Left ventricle myocardium superior (tissue), 1 donor: ENCODE measurements at regions of chr2 and their contacts with region 1.

Region 1: GRCh38 chr2:17830053-17831034 is 14.1 kb downstream of the MSGN1 start:
- DNase-seq: peak; percentile 86
- ATAC-seq: peak; percentile 97

Region 2: DNA sequence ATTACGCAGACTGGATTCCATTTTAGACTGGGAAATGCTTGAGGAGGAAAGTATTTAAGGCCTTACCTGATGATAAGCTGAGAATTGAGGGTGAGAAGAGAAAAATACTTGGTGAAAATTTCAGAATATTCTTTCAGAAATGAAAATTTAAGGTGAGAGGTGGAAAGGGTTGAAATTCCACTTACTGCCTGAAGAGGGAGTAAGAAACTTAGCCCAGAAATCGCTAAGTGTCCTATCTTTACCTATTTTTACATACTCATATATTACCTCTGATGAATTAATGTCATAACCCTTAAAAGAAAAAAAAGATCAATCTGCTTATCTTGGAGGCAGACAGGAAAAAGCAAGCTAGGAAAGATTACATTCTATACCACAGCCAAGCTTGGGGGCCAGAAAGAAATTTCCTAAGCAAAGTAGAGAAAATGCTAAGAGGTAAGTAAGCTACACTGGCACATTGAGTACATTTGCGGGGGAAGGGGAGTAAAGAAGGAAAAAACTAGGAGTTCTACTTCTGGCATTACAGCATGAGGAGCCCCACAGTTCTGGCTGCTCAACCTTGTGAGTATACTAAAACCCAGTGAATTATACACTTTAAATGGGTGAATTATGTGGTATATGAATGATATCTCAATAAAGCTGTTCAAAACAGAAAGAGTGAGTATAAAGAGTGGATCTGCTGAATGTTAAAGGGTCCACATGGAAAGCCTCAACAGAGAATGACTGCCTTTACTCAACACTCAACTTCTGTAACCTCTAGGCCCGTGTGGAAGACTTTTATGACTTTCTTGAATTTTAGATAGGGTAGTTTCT is 110.6 kb before region 1 on chr2:
- intact Hi-C with region 1: loop called (anchors 10 kb)
- DNase-seq: no peak
- ATAC-seq: no peak

Region 3: DNA sequence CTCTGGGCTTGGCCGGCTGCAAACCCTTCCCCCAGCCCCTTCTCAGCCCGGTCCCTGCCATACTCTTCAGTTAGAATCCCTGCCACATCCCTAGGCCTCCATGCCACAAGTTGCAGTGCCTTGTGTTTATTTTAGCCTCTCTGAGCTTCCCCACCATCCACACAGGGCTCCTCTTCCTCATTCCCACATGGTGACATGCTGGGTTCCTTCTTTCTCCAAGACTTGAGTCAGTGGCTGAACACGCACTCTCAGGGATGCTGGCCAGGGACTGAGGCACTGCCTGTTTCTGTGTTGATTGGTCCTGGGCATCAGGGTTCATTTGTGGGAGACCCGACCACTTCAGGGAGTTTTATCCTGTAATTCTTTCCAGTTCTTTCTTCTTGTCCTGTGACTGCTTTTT is 104.4 kb after region 1 on chr2:
- intact Hi-C with region 1: no loop called
- DNase-seq: no peak
- ATAC-seq: peak; percentile 41